ENCODE measurements at regions of chr13 and their contacts with region 1.

Region 1: DNA sequence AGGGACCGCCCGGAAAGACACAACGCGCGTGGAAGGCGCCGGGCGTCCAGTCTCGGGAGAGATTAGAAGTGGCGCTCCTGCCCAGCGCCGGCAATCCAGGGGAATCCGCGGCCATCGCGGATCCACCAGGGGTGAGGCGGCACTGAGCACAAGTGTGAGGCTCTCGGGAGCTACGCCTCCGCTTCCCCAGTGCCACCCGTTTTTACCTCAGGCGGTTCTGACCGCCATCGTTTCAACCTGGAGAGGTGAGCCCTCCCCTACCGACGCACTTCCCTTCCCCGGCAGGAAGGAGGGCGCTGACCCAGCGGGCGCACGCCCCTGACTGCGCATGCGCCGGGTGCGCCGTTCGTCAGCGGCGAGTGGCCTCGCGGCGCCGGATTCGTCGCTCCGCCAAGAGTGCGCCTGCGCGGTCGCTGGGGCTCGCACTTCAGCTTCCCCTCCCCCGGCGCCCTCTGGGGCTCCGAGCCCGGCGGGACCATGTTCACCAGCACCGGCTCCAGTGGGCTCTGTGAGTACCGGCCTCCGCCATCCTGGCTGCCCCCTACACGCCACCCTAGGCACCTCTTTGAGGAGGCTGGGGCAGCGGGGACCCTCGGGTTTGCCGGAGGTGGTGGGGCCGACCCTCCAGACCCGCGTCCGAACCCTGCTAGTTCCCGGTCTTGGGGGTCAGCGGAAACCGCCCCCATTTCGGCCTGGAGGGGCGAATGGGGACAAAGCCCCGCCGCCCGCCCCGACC is at the start of gene UBAC2:
- DNase-seq: peak; percentile 94
- H3K4me3 ChIP-seq: peak within 1 kb of the TSS; percentile 83 to 98 (median 84)
- H3K27ac ChIP-seq: peak within 1 kb of the TSS; percentile 79
- H3K4me1 ChIP-seq: peaks cover 23% of the 10 kb centered on the region
- H3K27me3 ChIP-seq: no peaks in the 10 kb centered on the region
- CTCF ChIP-seq: no peak
- total RNA-seq, gene UBAC2: 48.2 to 57.7 TPM

Region 2: GRCh38 chr13:99228737-99229691 is 28.4 kb after region 1 on chr13:
- CTCF ChIA-PET with region 1: no interaction called
- dilution Hi-C with region 1: no loop called
- in situ Hi-C with region 1: no loop called
- intact Hi-C with region 1: loop called (anchors 1 kb)
- DNase-seq: peak; percentile 90
- H3K4me3 ChIP-seq: peak overlapping the region in 1 of 3 experiments; percentile 17
- H3K27ac ChIP-seq: no peak overlapping the region
- H3K4me1 ChIP-seq: peaks cover 40% of the 10 kb centered on the region
- H3K27me3 ChIP-seq: no peaks in the 10 kb centered on the region
- CTCF ChIP-seq: no peak

Measured in mammary epithelial cell (primary cell).